WTC11 (cell line): ENCODE measurements at regions of chr14 and their contacts with region 1.

Region 1: DNA sequence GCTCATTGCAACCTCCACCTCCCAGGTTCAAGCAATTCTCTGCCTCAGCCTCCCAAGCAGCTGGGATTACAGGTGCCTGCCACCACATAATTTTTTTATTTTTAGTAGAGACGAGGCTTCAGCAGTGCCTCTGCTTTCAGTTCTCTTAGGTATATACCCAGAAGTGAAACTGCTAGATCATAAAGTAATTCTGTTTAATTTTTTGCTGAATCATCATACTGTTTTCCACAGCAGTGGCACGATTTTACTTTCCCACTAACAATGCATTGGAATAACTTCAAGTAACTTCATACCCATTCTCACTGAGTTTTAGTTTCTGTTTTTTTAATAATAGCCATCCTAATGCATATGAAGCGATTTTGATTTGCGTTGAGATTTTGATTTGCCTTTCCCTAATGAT is 148.0 kb upstream of the G2E3 start:
- DNase-seq: no peak
- ATAC-seq: no peak
- H3K4me3 Mint-ChIP-seq: no peak overlapping the region
- H3K27ac Mint-ChIP-seq: no peak overlapping the region
- H3K4me1 Mint-ChIP-seq: peaks cover 5% of the 10 kb centered on the region
- H3K27me3 Mint-ChIP-seq: no peaks in the 10 kb centered on the region
- CTCF ChIP-seq: no peak

Region 2: DNA sequence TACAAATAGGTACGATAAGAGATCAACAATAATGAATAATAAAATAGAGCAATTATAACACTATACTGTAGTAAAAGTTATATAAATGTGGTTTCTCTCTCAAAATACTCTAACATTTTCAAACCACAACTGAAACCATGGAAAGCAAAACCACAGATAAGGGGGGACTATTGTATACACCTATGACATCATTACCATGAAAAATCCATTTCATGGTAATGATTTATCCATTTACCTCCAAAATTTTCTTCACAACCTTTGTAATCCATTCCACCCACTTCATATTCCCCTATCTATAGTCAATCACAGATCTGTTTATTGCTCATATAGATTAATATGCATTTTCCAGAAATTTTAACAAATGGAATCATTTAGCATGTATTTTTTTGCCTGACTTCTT is 15.9 kb before region 1 on chr14:
- CTCF ChIA-PET with region 1: no interaction called
- POLR2A ChIA-PET with region 1: interaction called, 10 read pairs
- DNase-seq: no peak
- ATAC-seq: no peak
- H3K4me3 Mint-ChIP-seq: no peak overlapping the region
- H3K27ac Mint-ChIP-seq: no peak overlapping the region
- H3K4me1 Mint-ChIP-seq: peaks cover 4% of the 10 kb centered on the region; the same call in 1 of the 2 replicates
- H3K27me3 Mint-ChIP-seq: no peaks in the 10 kb centered on the region
- CTCF ChIP-seq: no peak